CD4-positive, alpha-beta memory T cell (primary cell): ENCODE measurements at regions of chr5 and their contacts with region 1.

Region 1: DNA sequence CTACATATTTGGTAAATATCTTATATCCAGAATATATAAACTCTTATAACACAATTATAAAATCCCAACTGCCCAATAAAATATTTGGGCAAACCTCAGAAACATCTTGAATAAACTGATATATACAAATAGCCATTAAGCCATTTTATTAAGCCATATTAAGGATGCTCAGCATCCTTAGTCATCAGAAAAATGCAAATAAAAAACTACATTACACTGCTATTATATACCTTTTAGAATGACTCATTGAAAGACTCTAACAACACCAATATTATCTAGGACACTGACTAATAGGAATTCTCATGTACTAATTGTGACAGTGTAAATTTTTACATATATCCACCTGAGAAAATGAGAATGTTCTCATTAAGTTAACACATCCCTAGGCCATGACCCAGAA is 77.8 kb downstream of the CDH10 start:
- DNase-seq: no peak
- H3K4me3 ChIP-seq: no peak overlapping the region
- H3K4me3 Mint-ChIP-seq: no peak overlapping the region
- H3K27ac ChIP-seq: no peak overlapping the region
- H3K27ac Mint-ChIP-seq: no peak overlapping the region
- H3K4me1 ChIP-seq: no peaks in the 10 kb centered on the region
- H3K4me1 Mint-ChIP-seq: no peaks in the 10 kb centered on the region
- H3K27me3 ChIP-seq: no peaks in the 10 kb centered on the region
- H3K27me3 Mint-ChIP-seq: no peaks in the 10 kb centered on the region

Region 2: GRCh38 chr5:24585751-24586150 is 18.8 kb after region 1 on chr5:
- CTCF ChIA-PET with region 1: no interaction called
- POLR2A ChIA-PET with region 1: no interaction called
- intact Hi-C with region 1: loop called (anchors 1 kb)
- DNase-seq: no peak
- H3K4me3 ChIP-seq: no peak overlapping the region
- H3K4me3 Mint-ChIP-seq: no peak overlapping the region
- H3K27ac ChIP-seq: no peak overlapping the region
- H3K27ac Mint-ChIP-seq: no peak overlapping the region
- H3K4me1 ChIP-seq: no peaks in the 10 kb centered on the region
- H3K4me1 Mint-ChIP-seq: no peaks in the 10 kb centered on the region
- H3K27me3 ChIP-seq: no peaks in the 10 kb centered on the region
- H3K27me3 Mint-ChIP-seq: no peaks in the 10 kb centered on the region

Region 3: GRCh38 chr5:25405850-25406249 is 838.9 kb after region 1 on chr5:
- CTCF ChIA-PET with region 1: no interaction called
- POLR2A ChIA-PET with region 1: no interaction called
- intact Hi-C with region 1: no loop called
- DNase-seq: no peak
- H3K4me3 ChIP-seq: no peak overlapping the region
- H3K4me3 Mint-ChIP-seq: no peak overlapping the region
- H3K27ac ChIP-seq: no peak overlapping the region
- H3K27ac Mint-ChIP-seq: no peak overlapping the region
- H3K4me1 ChIP-seq: no peaks in the 10 kb centered on the region
- H3K4me1 Mint-ChIP-seq: no peaks in the 10 kb centered on the region
- H3K27me3 ChIP-seq: no peaks in the 10 kb centered on the region
- H3K27me3 Mint-ChIP-seq: no peaks in the 10 kb centered on the region